ENCODE measurements at regions of chr3 and their contacts with region 1.

Region 1: DNA sequence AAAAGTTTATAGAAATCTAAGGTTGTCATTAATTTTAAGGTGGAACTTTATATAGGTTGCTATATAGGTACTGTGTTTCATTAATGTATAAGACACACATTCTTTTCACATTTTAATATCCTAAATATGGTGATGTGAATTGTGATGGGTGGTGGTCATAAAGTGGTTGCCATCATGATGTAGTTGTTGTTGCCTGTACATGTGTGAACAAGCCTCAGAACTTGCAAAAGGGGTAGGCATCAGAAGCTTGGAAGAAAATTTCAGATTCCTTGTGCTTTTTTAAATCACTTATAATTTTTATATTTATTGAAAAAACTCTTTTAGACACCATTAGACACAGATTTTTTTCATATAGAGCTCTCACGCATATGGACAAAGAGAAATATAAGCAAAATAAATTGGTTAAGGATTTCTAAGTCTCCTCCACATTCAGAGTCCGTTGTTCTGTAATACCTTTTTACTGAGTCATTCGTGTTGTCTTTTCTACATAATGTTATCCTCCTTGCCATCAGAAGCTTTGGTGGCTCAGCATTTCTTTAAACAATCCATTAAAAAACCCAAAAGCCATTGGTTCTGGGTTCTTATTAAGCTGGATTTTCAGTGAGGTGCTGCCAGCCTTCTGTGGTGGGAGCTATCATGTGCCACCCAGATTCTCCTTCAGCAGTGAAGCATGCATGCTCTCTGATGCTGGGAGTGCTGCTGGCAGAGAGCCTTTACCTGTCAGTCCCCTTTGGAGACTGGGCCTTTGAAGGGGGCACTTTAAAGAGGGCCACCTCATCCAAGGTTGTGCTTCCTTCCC is 140.4 kb upstream of the GALNT15 start:
- DNase-seq: no peak
- ATAC-seq: no peak
- H3K4me3 ChIP-seq: no peak overlapping the region
- H3K27ac ChIP-seq: peak overlapping the region in 1 of 4 donors; percentile 12
- H3K4me1 ChIP-seq: no peaks in the 10 kb centered on the region
- H3K27me3 ChIP-seq: no peaks in the 10 kb centered on the region
- CTCF ChIP-seq: no peak
- POLR2A ChIP-seq: no peak

Region 2: DNA sequence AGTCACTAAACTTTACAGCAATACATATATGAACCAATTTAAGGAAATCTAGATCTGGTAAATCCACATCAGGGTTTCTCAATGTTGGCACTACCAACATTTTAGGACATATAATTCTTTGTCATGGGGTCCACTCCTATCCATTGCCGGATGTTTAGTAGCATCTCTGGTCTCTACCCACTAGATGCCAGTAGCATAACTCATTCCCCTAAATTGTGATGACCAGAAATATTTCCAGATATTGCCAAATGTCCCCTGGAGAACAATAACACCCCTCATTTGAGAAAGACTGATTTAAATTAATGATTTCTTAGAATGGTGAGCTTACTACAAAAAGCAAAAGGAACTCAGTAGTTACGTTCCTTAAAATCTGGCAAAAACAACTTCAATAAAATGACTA is 213.2 kb before region 1 on chr3:
- in situ Hi-C with region 1: loop called in 2 of 4 experiments (anchors 10 to 25 kb)
- intact Hi-C with region 1: no loop called
- DNase-seq: no peak
- ATAC-seq: no peak
- H3K4me3 ChIP-seq: no peak overlapping the region
- H3K27ac ChIP-seq: no peak overlapping the region
- H3K4me1 ChIP-seq: peaks cover 20 to 24% of the 10 kb centered on the region in 2 donors
- H3K27me3 ChIP-seq: no peaks in the 10 kb centered on the region
- CTCF ChIP-seq: no peak
- POLR2A ChIP-seq: no peak

Measured in gastrocnemius medialis (tissue), 4 donors.